GM12878 (cell line): ENCODE measurements at regions of chr17 and their contacts with region 1.

Region 1: GRCh38 chr17:700504-701094 is 14.0 kb downstream of the VPS53 start:
- DNase-seq: no peak
- ATAC-seq: peak; percentile 52
- H3K4me3 ChIP-seq: no peak overlapping the region
- H3K27ac ChIP-seq: no peak overlapping the region
- H3K4me1 ChIP-seq: no peaks in the 10 kb centered on the region
- H3K27me3 ChIP-seq: no peaks in the 10 kb centered on the region
- CTCF ChIP-seq: peak; percentile 37 to 64 (median 43); a peak in 5 of 6 replicates
- EP300 ChIP-seq: no peak
- POLR2A ChIP-seq: no peak
- RAD21 ChIP-seq: peak; percentile 67

Region 2: DNA sequence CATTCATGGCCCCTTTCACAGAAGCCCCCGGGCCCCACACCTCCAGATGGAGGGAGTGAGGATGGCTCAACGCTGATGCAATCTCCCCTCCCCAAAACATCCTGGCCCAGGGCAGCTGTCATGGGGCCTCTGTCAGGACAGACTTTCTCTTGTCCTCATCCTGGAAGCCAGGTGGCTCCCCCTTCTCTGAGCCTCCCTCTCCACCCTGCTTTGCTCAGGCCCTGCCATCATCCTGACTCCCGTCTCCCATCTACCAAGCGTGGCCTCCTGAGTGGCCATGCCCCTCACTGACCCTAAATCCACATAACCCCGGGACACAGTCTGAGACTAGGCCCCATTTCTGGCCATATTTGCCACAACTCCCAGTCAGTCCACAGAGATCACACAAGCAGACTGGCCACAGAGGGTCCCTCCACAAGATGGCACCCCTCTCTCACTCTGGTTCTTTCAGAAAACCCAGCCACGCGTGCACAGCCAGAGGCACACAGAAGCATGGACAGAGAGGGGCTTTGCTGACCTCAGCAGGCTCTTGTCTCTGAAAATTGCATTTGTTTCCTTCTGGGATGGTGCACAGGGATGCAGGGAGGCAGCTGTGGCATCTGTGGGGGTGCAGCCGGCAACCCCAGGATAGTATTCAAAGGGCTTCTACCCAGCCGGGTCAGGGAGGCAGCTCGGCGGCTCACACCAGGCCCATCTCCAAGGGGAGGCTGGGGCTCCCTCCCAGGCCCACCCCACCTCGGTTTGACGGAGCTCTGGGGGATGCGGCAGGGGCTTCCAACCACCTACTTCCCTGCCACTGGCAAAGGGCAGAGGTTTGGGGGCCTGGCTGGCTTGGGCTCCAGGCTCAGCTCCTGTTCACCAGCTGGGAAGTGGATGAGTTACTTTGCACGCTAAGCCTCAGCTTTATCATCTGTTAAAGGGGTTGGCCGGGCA is 536.0 kb before region 1 on chr17:
- CTCF ChIA-PET with region 1: interaction called, 3 read pairs
- POLR2A ChIA-PET with region 1: no interaction called
- RAD21 ChIA-PET with region 1: interaction called, 5 read pairs
- SMC1A ChIA-PET with region 1: no interaction called
- in situ Hi-C with region 1: no loop called
- intact Hi-C with region 1: loop called (anchors 5 kb)
- DNase-seq: no peak
- ATAC-seq: peak; percentile 86
- H3K4me3 ChIP-seq: no peak overlapping the region
- H3K27ac ChIP-seq: no peak overlapping the region
- H3K4me1 ChIP-seq: peaks cover 5% of the 10 kb centered on the region; the same call in 1 of the 2 replicates
- H3K27me3 ChIP-seq: no peaks in the 10 kb centered on the region
- CTCF ChIP-seq: peak; percentile 48 to 63 (median 56)
- EP300 ChIP-seq: no peak
- POLR2A ChIP-seq: no peak
- RAD21 ChIP-seq: peak; percentile 59

Region 3: DNA sequence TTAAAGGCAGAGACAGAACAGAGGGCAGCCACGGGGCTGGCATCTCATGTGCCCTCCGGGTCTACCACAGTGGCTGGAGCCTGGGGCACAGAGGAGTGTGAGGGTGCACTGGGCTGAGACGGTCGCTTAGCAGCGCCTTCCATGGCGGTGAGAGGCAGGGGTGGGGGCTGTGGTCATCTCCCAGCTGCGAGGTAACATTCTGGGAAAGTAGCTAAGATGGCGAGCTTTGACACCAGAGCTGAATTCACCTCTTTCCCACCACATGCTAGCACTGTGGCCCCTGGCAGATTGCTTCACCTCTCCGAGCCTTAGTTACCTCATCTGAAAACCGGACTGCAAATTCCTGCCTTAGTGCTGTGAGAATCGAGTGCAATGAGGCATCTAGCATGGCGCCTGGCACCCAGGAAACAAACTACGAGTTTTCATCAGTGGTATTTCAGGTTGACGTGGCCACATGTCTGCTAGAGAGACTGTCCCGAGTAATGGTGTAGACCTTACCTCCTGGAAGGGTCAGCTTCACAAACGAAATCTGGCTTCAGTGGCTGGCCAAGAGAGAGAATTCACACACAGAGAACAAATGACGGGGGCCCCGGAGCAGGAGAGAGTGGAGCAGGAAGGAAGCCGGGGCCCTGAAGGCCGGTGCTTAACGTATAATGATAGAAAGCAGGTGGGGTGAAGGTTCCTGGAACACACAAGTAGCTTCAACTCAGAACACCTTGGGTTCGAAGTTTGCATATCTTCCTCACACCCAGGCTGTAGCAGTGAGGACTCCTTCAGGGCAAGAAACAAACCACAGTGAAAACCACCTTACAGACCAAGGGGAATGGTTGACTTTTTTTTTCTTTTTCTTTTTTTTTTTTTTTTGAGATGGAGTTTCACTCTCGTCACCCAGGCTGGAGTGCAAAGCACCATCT is 284.0 kb before region 1 on chr17:
- CTCF ChIA-PET with region 1: interaction called, 210 read pairs
- POLR2A ChIA-PET with region 1: interaction called, 11 read pairs
- RAD21 ChIA-PET with region 1: interaction called, 104 read pairs
- SMC1A ChIA-PET with region 1: interaction called, 99 read pairs
- in situ Hi-C with region 1: loop called (anchors 5 kb)
- intact Hi-C with region 1: loop called (anchors 1 kb)
- DNase-seq: peak; percentile 85
- ATAC-seq: peak; percentile 87
- H3K4me3 ChIP-seq: peak overlapping the region; percentile 75
- H3K27ac ChIP-seq: peak overlapping the region; percentile 99
- H3K4me1 ChIP-seq: peaks cover 35% of the 10 kb centered on the region
- H3K27me3 ChIP-seq: no peaks in the 10 kb centered on the region
- CTCF ChIP-seq: peak in 2 of 3 experiments; percentile 8 to 15; a peak in 1 of 6 replicates
- EP300 ChIP-seq: peak in 1 of 2 experiments; percentile 48; a peak in 1 of 4 replicates
- POLR2A ChIP-seq: peak; percentile 70
- RAD21 ChIP-seq: peak; percentile 26

Region 4: DNA sequence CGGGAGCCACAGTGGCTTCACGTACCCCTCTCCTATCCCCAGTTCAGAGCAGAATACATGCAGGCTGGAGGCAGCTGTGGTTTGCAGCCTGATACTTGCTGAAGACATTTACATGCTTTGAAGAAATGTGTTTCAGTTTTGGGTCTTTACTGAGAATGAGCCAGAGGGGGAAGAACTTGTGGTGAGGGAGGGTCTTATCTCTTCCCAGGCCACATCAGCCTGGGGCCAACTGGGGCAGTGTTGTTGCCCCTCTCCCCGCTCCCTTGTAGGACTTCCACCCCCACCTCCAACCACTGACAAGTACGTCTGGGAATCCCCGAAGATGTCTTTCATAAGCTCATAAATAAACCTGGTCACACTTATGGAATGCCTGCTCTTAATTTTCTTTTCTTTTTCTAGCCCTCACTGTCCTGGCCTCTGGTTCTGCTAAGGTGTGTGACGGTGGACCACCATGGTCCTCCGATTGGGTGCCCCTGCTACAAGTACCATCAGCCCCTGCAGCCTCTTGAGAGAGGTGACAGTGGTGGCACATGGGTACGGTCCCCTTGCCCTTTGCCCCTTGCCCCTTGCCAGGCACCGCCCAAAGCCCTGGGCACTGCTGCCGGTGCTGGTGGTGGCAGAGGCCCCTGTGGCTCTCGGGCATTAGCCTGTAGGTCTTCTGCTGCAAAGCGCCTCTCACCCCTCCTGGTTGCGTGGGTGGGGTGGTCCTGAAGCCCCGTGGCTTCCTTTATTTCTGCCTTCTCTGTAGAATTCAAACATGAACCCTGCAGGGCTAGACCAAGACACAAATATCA is 203.2 kb before region 1 on chr17:
- CTCF ChIA-PET with region 1: interaction called, 12 read pairs
- POLR2A ChIA-PET with region 1: no interaction called
- RAD21 ChIA-PET with region 1: no interaction called
- SMC1A ChIA-PET with region 1: no interaction called
- in situ Hi-C with region 1: no loop called
- intact Hi-C with region 1: no loop called
- DNase-seq: no peak
- ATAC-seq: peak; percentile 79
- H3K4me3 ChIP-seq: no peak overlapping the region
- H3K27ac ChIP-seq: peak overlapping the region; percentile 24; the same call in 1 of the 2 replicates
- H3K4me1 ChIP-seq: peaks cover 16% of the 10 kb centered on the region
- H3K27me3 ChIP-seq: no peaks in the 10 kb centered on the region
- CTCF ChIP-seq: no peak
- EP300 ChIP-seq: no peak
- POLR2A ChIP-seq: no peak
- RAD21 ChIP-seq: no peak

Region 5: DNA sequence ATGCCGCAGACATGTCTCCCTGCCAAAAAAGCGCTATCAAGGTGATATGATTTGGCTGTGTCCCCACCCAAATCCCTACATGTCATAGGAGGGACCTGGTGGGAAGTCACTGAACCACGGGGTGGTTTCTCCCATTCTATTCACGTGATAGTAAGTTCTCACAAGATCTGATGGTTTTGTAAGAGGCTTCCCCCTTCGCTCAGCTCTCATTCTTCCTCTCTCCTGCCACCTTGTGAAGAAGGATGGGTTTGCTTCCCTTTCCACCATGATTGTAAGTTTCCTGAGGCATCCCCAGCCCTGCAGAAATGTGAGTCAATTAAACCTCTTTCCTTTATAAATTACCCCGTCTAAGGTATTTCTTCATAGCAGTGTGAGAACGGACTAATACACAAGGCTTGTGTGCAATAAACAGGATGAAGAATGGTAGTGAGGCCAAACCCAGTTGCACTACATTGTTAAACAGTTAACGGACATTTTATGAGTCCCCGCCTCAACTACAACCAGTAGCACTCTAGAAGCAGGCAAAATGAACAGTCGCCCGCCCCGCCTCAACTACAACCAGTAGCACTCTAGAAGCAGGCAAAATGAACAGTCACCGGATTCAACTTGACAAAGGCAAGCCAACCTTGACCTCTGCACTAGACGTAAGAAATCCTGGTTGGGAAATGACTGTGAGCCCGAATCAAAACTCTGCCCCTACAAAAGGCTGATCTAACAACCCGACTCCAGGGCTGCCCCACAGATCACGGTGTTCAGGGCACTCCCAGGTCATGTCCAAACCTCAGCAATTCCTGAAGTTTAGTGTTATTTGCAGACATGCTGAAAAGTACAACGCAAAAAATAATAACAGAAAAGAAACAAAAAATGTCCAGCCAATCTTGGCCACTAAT is 12.3 kb before region 1 on chr17:
- CTCF ChIA-PET with region 1: interaction called, 16 read pairs
- POLR2A ChIA-PET with region 1: interaction called, 3 read pairs
- RAD21 ChIA-PET with region 1: interaction called, 13 read pairs
- SMC1A ChIA-PET with region 1: interaction called, 10 read pairs
- in situ Hi-C with region 1: no loop called
- intact Hi-C with region 1: no loop called
- DNase-seq: no peak
- ATAC-seq: no peak
- H3K4me3 ChIP-seq: no peak overlapping the region
- H3K27ac ChIP-seq: no peak overlapping the region
- H3K4me1 ChIP-seq: no peaks in the 10 kb centered on the region
- H3K27me3 ChIP-seq: no peaks in the 10 kb centered on the region
- CTCF ChIP-seq: no peak
- EP300 ChIP-seq: no peak
- POLR2A ChIP-seq: no peak
- RAD21 ChIP-seq: no peak

Region 6: GRCh38 chr17:888998-889441 is 188.4 kb after region 1 on chr17:
- CTCF ChIA-PET with region 1: no interaction called
- POLR2A ChIA-PET with region 1: no interaction called
- RAD21 ChIA-PET with region 1: no interaction called
- SMC1A ChIA-PET with region 1: no interaction called
- in situ Hi-C with region 1: no loop called
- intact Hi-C with region 1: no loop called
- DNase-seq: peak; percentile 24
- ATAC-seq: peak; percentile 21; the same call in 1 of the 3 replicates
- H3K4me3 ChIP-seq: no peak overlapping the region
- H3K27ac ChIP-seq: no peak overlapping the region
- H3K4me1 ChIP-seq: peaks cover 3% of the 10 kb centered on the region; the same call in 1 of the 2 replicates
- H3K27me3 ChIP-seq: no peaks in the 10 kb centered on the region
- CTCF ChIP-seq: no peak
- EP300 ChIP-seq: no peak
- POLR2A ChIP-seq: no peak
- RAD21 ChIP-seq: no peak